CD14-positive monocyte (primary cell): ENCODE measurements at regions of chr16 and their contacts with region 1.

Region 1: GRCh38 chr16:46555951-46556350 is 65.2 kb downstream of the SHCBP1 start:
- DNase-seq: no peak
- H3K4me3 ChIP-seq: no peak overlapping the region
- H3K4me3 Mint-ChIP-seq: peak overlapping the region in 1 of 2 donors; percentile 42
- H3K27ac ChIP-seq: no peak overlapping the region
- H3K27ac Mint-ChIP-seq: no peak overlapping the region
- H3K4me1 ChIP-seq: no peaks in the 10 kb centered on the region
- H3K4me1 Mint-ChIP-seq: peaks cover 5% of the 10 kb centered on the region
- H3K27me3 ChIP-seq: peaks cover 0 to 16% of the 10 kb centered on the region in 2 donors
- H3K27me3 Mint-ChIP-seq: peaks cover 7 to 16% (median 11%) of the 10 kb centered on the region in 3 donors
- CTCF ChIP-seq: no peak

Region 2: GRCh38 chr16:46607529-46607928 is 51.6 kb after region 1 on chr16:
- intact Hi-C with region 1: loop called in 1 of 2 experiments (anchors 10 kb)
- DNase-seq: peak in 2 of 3 donors; percentile 15 to 30
- H3K4me3 ChIP-seq: no peak overlapping the region
- H3K4me3 Mint-ChIP-seq: no peak overlapping the region
- H3K27ac ChIP-seq: no peak overlapping the region
- H3K27ac Mint-ChIP-seq: no peak overlapping the region
- H3K4me1 ChIP-seq: no peaks in the 10 kb centered on the region
- H3K4me1 Mint-ChIP-seq: no peaks in the 10 kb centered on the region
- H3K27me3 ChIP-seq: no peaks in the 10 kb centered on the region
- H3K27me3 Mint-ChIP-seq: no peaks in the 10 kb centered on the region
- CTCF ChIP-seq: peak; percentile 49

Region 3: GRCh38 chr16:46621934-46622676 is 66.2 kb after region 1 on chr16:
- intact Hi-C with region 1: loop called in 1 of 2 experiments (anchors 2 kb)
- DNase-seq: peak in 2 of 3 donors; percentile 16 to 29
- H3K4me3 ChIP-seq: peak overlapping the region in 1 of 3 experiments; percentile 84
- H3K4me3 Mint-ChIP-seq: peak overlapping the region; percentile 89 to 90
- H3K27ac ChIP-seq: peak overlapping the region in 1 of 2 donors; percentile 75
- H3K27ac Mint-ChIP-seq: peak overlapping the region in 6 of 7 donors; percentile 77 to 92 (median 90)
- H3K4me1 ChIP-seq: peaks cover 21 to 23% of the 10 kb centered on the region in 2 donors
- H3K4me1 Mint-ChIP-seq: peaks cover 22% of the 10 kb centered on the region
- H3K27me3 ChIP-seq: no peaks in the 10 kb centered on the region
- H3K27me3 Mint-ChIP-seq: peaks cover 0 to 4% (median 0%) of the 10 kb centered on the region in 3 donors
- CTCF ChIP-seq: no peak